Transverse colon (tissue), 4 donors: ENCODE measurements at regions of chr16 and their contacts with region 1.

Region 1: GRCh38 chr16:87778830-87779579 is 13.2 kb upstream of the KLHDC4 start:
- DNase-seq: peak; percentile 93
- H3K4me3 ChIP-seq: no peak overlapping the region
- H3K27ac ChIP-seq: peak overlapping the region; percentile 18 to 51 (median 32)
- H3K4me1 ChIP-seq: peaks cover 0 to 24% (median 11%) of the 10 kb centered on the region in 4 donors
- H3K27me3 ChIP-seq: no peaks in the 10 kb centered on the region
- CTCF ChIP-seq: peak; percentile 96 to 99 (median 98)
- EP300 ChIP-seq: peak; percentile 9
- POLR2A ChIP-seq: no peak

Region 2: DNA sequence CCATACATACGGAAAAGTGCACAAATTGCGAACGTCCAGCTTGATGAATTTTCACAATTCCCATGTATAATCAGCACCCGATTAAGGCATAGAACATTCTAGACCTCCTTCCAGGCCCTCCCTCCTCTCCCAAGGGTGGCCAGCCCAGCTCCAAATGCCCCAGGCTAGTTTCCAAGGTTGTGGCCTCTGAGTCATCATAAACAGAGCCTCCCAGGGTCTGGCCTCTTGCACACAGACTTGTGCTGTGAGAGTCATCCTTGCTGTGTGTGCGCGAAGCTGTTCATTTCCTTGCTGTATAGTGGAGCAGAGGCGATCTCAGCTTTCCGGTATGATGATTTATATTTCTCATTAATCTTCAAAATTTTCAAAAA is 197.2 kb before region 1 on chr16:
- in situ Hi-C with region 1: loop called in 1 of 4 experiments (anchors 10 kb)
- intact Hi-C with region 1: no loop called
- DNase-seq: peak; percentile 60
- H3K4me3 ChIP-seq: no peak overlapping the region
- H3K27ac ChIP-seq: peak overlapping the region; percentile 82 to 90 (median 88)
- H3K4me1 ChIP-seq: peaks cover 6 to 15% (median 8%) of the 10 kb centered on the region in 4 donors
- H3K27me3 ChIP-seq: peaks cover 26% of the 10 kb centered on the region
- CTCF ChIP-seq: no peak
- EP300 ChIP-seq: no peak
- POLR2A ChIP-seq: no peak

Region 3: DNA sequence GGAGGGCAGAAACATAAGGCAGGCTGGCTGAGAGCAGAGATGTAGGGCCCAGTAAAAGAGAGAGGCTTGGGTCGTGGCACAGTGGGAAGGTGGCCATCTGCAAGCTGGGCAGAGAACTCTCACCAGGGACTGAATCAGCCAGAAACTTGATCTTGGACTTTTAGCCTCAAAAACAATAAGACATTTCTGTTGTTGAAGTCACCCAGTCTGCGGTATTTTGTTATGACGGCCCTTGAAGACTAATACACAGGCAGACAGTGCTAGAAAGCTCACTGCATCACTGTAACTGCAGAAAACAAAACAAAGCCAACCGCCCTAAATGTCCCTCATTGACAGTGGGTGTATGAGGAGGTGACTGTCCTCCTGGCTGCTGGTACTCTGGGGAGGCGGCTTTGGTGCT is 180.6 kb before region 1 on chr16:
- in situ Hi-C with region 1: no loop called
- intact Hi-C with region 1: loop called (anchors 5 kb)
- DNase-seq: no peak
- H3K4me3 ChIP-seq: no peak overlapping the region
- H3K27ac ChIP-seq: no peak overlapping the region
- H3K4me1 ChIP-seq: peaks cover 0 to 11% (median 3%) of the 10 kb centered on the region in 4 donors
- H3K27me3 ChIP-seq: peaks cover 60% of the 10 kb centered on the region
- CTCF ChIP-seq: no peak
- EP300 ChIP-seq: no peak
- POLR2A ChIP-seq: no peak

Region 4: GRCh38 chr16:87877938-87878507 is 99.0 kb after region 1 on chr16:
- in situ Hi-C with region 1: loop called in 2 of 4 experiments (anchors 10 kb)
- intact Hi-C with region 1: no loop called
- DNase-seq: no peak
- H3K4me3 ChIP-seq: no peak overlapping the region
- H3K27ac ChIP-seq: no peak overlapping the region
- H3K4me1 ChIP-seq: no peaks in the 10 kb centered on the region
- H3K27me3 ChIP-seq: peaks cover 34% of the 10 kb centered on the region
- CTCF ChIP-seq: no peak
- EP300 ChIP-seq: no peak
- POLR2A ChIP-seq: no peak

Region 5: DNA sequence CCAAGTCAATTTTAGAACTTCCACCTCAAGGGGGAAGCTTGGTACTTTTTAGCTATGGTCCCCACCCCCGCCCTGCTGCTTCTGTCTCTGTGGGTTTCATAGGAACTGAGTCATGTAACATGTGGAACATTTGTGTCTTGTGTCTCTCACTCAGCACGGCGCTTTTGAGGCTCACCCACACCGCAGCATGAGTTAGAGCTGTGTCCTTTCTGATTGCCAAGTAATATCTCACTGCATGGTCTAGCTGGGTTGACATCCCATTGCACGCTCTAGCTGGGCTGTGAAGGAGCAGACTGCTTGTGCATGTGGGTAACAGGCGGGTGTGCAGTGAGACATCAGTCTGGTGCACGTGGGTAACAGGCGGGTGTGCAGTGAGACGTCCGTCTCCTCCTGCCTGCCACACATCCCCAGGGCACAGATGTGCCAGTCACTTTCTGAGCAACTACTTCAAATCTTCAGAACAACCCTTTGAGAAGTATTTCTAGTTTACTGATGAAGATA is 116.7 kb after region 1 on chr16:
- in situ Hi-C with region 1: loop called in 2 of 4 experiments (anchors 10 to 25 kb)
- intact Hi-C with region 1: no loop called
- DNase-seq: peak; percentile 34
- H3K4me3 ChIP-seq: no peak overlapping the region
- H3K27ac ChIP-seq: peak overlapping the region in 1 of 4 donors; percentile 30
- H3K4me1 ChIP-seq: peaks cover 0 to 7% (median 0%) of the 10 kb centered on the region in 4 donors
- H3K27me3 ChIP-seq: no peaks in the 10 kb centered on the region
- CTCF ChIP-seq: no peak
- EP300 ChIP-seq: no peak
- POLR2A ChIP-seq: no peak

Region 6: DNA sequence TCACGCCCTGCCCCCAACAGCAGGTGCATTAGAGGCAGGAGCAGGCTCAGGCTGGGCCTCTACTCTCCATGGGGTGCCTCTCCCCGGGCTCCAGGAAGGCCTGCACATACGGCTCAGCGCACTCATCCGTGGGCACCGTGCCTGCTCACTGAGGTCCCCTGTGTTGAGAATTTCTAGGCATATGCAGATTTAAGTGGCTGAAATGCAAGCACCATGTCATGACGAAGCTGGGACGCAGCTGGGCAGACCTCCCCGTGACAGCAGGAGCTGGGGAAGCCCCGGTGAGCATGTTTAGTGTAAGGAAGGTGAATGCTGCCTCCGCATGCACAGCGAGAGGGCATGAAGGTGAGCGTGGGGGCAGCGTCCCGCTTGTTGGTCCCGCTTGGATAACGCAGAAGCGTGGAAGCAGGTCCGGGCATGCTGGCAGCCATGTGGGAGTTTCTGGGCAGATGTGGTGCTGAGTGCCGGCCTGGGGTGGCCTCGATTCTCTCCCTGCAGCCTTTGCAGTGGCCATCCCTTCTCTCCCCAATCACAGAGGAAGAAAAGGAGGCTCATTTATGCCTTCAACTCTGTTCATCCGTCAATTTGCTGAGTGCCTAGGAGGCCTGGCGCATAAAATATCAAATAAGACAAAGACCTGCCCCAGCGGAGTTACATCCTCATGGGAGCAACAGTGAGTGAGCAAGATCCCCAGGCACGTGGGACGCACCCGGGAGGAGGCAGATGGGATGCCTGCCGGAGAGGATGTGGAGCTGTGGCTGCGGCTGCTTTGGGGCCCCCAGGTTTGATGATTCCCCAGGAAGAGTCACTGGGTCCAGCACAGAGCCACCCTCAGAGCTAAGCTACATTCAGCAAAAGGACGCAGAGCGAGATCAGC is 145.7 kb after region 1 on chr16:
- in situ Hi-C with region 1: loop called in 1 of 4 experiments (anchors 25 kb)
- intact Hi-C with region 1: no loop called
- DNase-seq: peak; percentile 25
- H3K4me3 ChIP-seq: no peak overlapping the region
- H3K27ac ChIP-seq: no peak overlapping the region
- H3K4me1 ChIP-seq: no peaks in the 10 kb centered on the region
- H3K27me3 ChIP-seq: peaks cover 8% of the 10 kb centered on the region
- CTCF ChIP-seq: no peak
- EP300 ChIP-seq: no peak
- POLR2A ChIP-seq: no peak